ENCODE measurements at regions of chr22 and their contacts with region 1.

Region 1: GRCh38 chr22:44483878-44484277 is 14.2 kb downstream of the RTL6 start:
- DNase-seq: peak; percentile 84
- H3K4me3 ChIP-seq: no peak overlapping the region
- H3K27ac ChIP-seq: no peak overlapping the region
- H3K4me1 ChIP-seq: peaks cover 13% of the 10 kb centered on the region
- H3K27me3 ChIP-seq: no peaks in the 10 kb centered on the region
- CTCF ChIP-seq: no peak

Region 2: DNA sequence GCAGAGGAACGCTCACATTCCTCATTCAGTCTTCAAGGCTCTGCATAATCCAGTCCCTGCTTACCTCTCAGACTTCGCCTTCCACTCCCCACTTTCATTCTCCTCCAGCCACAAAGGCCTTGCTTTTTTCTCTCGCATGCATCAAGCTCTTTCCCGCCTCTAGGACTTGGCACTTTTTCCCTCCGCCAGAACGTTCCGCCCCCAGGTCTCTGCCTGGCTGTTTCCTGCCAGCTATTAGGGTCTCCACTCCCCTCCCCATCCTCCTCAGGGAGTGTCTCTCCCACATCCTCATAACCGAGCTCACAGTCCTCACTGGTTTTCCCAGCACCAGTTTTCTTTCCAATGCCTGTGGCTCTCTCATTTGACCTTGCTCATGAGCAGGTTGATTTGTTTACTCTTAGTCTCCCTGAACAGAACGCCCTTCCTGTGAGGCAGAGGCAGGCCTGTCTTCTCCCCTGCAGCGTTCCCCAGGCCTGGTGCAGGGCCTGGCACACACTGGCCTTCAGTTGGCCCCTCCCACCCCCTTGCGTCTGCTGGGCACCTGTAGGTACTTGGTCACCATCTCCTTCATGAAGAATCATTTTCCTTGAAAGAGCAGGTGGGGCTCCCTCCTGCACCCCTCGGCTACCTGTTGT is 61.0 kb before region 1 on chr22:
- CTCF ChIA-PET with region 1: no interaction called
- POLR2A ChIA-PET with region 1: interaction called, 18 read pairs
- intact Hi-C with region 1: no loop called
- DNase-seq: no peak
- H3K4me3 ChIP-seq: no peak overlapping the region
- H3K27ac ChIP-seq: no peak overlapping the region
- H3K4me1 ChIP-seq: no peaks in the 10 kb centered on the region
- H3K27me3 ChIP-seq: no peaks in the 10 kb centered on the region
- CTCF ChIP-seq: no peak